Ovary (tissue), 10 donors: ENCODE measurements at regions of chr14 and their contacts with region 1.

Region 1: GRCh38 chr14:23910101-23910875 is 43.3 kb upstream of the DHRS4 start:
- DNase-seq: peak in 3 of 5 donors; percentile 34 to 52 (median 45)
- H3K4me3 ChIP-seq: no peak overlapping the region
- H3K27ac ChIP-seq: no peak overlapping the region
- H3K4me1 ChIP-seq: no peaks in the 10 kb centered on the region
- H3K27me3 ChIP-seq: no peaks in the 10 kb centered on the region
- CTCF ChIP-seq: peak in 1 of 3 donors; percentile 45
- EP300 ChIP-seq: no peak
- POLR2A ChIP-seq: no peak

Region 2: GRCh38 chr14:23512156-23512555 is 398.1 kb before region 1 on chr14:
- intact Hi-C with region 1: no loop called
- DNase-seq: no peak
- H3K4me3 ChIP-seq: no peak overlapping the region
- H3K27ac ChIP-seq: no peak overlapping the region
- H3K4me1 ChIP-seq: no peaks in the 10 kb centered on the region
- H3K27me3 ChIP-seq: no peaks in the 10 kb centered on the region
- CTCF ChIP-seq: no peak
- EP300 ChIP-seq: no peak
- POLR2A ChIP-seq: no peak

Region 3: GRCh38 chr14:23640524-23641141 is 269.7 kb before region 1 on chr14:
- intact Hi-C with region 1: loop called in 2 of 4 experiments (anchors 10 kb)
- DNase-seq: peak; percentile 89 to 94 (median 92)
- H3K4me3 ChIP-seq: no peak overlapping the region
- H3K27ac ChIP-seq: peak overlapping the region in 1 of 2 donors; percentile 88
- H3K4me1 ChIP-seq: peaks cover 23% of the 10 kb centered on the region
- H3K27me3 ChIP-seq: no peaks in the 10 kb centered on the region
- CTCF ChIP-seq: no peak
- EP300 ChIP-seq: no peak
- POLR2A ChIP-seq: no peak

Region 4: DNA sequence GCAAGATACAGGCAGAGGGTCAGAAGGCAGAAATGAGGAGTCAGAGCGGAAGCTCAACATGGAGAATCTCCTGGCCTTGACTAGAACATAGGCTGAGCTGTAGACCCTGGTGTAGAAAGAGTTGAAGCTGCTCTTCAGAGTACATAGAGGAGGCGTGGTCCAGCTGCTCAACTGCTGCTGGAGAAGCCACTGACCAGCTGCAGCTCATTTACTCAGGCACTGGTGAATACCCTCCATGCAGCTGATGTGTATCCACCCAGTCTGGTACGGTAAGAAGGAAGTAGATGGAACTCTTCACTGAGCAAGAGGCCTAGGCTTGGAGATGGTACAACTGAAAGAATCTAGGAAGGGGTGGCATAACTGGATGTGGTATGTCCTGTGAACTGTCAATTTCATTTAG is 105.5 kb before region 1 on chr14:
- intact Hi-C with region 1: no loop called
- DNase-seq: no peak
- H3K4me3 ChIP-seq: no peak overlapping the region
- H3K27ac ChIP-seq: no peak overlapping the region
- H3K4me1 ChIP-seq: no peaks in the 10 kb centered on the region
- H3K27me3 ChIP-seq: no peaks in the 10 kb centered on the region
- CTCF ChIP-seq: no peak
- EP300 ChIP-seq: no peak
- POLR2A ChIP-seq: no peak